Activated CD8-positive, alpha-beta memory T cell treated with anti-CD3 and anti-CD28 coated beads, Interleukin-2, amount 10 ng/mL, durations not matched to agents 7 days and 5 days (primary cell): ENCODE measurements at regions of chr16 and their contacts with region 1.

Region 1: DNA sequence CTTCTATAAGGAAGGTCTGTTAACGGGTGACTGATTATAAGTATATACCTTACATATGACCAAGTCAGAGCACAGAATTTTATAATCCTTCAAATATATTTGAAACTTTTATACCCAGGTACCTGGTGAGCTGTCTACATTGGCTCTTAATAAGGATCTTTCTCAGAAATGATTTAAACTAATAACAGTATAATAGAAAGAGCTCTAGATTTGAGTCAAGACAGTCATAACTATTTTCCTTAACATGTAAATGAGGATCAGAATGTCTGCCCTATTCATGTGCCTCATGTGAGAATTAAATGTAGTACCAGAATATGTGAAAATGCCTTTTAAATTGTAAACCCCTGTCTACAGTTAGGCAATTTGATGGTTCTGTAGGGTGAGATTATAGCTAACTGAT is 14.5 kb downstream of the CBFB start:
- DNase-seq: no peak
- ATAC-seq: no peak
- H3K4me3 Mint-ChIP-seq: no peak overlapping the region
- H3K27ac Mint-ChIP-seq: no peak overlapping the region
- H3K4me1 Mint-ChIP-seq: peaks cover 38% of the 10 kb centered on the region
- H3K27me3 Mint-ChIP-seq: no peaks in the 10 kb centered on the region

Region 2: DNA sequence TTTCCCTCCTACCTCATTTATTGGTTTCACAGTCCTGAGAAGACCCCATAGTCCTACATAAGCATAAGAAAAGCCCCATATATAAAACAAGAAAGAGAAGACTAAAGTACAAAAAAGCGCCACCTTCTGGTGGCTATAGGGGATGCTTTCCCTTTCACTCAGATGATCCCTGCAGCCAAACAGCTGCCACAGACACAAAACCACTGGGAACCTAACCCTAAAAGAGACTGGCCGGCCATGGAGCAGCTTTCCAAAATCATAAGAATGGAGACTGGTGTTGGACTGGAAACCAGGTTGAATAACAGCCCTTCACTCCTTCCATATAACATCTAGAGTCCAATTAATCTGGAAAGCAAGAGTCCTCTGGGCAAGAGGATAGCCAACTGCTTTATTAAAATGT is 303.4 kb before region 1 on chr16:
- CTCF ChIA-PET with region 1: no interaction called
- DNase-seq: peak; percentile 57
- ATAC-seq: peak; percentile 57
- H3K4me3 Mint-ChIP-seq: no peak overlapping the region
- H3K27ac Mint-ChIP-seq: no peak overlapping the region
- H3K4me1 Mint-ChIP-seq: peaks cover 27% of the 10 kb centered on the region
- H3K27me3 Mint-ChIP-seq: no peaks in the 10 kb centered on the region

Region 3: DNA sequence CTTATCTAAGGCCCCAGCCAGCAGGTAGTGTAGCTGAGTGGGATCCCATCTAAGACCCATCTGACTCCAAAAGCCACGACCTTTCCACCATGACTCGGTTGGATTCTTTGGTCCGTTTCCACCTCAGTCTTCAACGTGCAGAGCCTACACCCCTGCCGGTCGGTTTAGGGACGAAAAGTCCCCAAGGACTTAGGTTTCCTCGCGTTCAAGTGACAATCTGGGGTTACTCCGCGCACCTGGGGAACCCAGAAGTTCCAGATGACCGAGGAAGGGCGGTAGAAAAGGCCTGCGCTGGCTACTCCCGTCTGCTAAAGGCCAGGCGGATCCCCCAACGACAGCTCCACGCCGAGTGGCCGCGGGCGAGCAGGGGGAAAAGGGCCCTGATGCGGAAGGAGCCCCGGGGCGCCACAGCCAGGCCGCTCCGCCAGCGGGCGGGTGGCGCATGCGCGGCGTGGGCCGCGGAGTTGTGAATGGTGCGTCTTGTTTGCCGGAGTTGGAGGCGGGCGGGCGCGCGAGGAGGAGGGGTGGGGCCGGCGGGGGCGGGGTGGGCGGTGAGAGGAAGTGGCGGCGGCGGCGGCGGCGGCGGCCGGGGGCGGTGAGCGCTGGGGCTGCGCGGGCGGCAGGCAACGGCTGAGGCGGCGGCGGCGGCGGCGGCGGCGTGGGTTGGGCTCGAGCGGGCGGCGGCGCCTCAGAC is 14.7 kb before region 1 on chr16 and contains the start of gene CBFB:
- CTCF ChIA-PET with region 1: interaction called, 12 read pairs
- DNase-seq: peak; percentile 95
- ATAC-seq: peak; percentile 94
- H3K4me3 Mint-ChIP-seq: peak within 1 kb of the TSS; percentile 92
- H3K27ac Mint-ChIP-seq: peak within 1 kb of the TSS; percentile 94
- H3K4me1 Mint-ChIP-seq: peaks cover 48% of the 10 kb centered on the region
- H3K27me3 Mint-ChIP-seq: no peaks in the 10 kb centered on the region
- total RNA-seq, gene CBFB: 180 to 196 TPM

Region 4: GRCh38 chr16:67068212-67068753 is 24.9 kb after region 1 on chr16:
- CTCF ChIA-PET with region 1: no interaction called
- DNase-seq: no peak
- ATAC-seq: no peak
- H3K4me3 Mint-ChIP-seq: no peak overlapping the region
- H3K27ac Mint-ChIP-seq: no peak overlapping the region
- H3K4me1 Mint-ChIP-seq: peaks cover 4% of the 10 kb centered on the region
- H3K27me3 Mint-ChIP-seq: no peaks in the 10 kb centered on the region

Region 5: GRCh38 chr16:67091906-67092566 is 48.6 kb after region 1 on chr16:
- CTCF ChIA-PET with region 1: no interaction called
- DNase-seq: no peak
- ATAC-seq: no peak
- H3K4me3 Mint-ChIP-seq: no peak overlapping the region
- H3K27ac Mint-ChIP-seq: peak overlapping the region; percentile 21
- H3K4me1 Mint-ChIP-seq: peaks cover 2% of the 10 kb centered on the region
- H3K27me3 Mint-ChIP-seq: no peaks in the 10 kb centered on the region

Region 6: DNA sequence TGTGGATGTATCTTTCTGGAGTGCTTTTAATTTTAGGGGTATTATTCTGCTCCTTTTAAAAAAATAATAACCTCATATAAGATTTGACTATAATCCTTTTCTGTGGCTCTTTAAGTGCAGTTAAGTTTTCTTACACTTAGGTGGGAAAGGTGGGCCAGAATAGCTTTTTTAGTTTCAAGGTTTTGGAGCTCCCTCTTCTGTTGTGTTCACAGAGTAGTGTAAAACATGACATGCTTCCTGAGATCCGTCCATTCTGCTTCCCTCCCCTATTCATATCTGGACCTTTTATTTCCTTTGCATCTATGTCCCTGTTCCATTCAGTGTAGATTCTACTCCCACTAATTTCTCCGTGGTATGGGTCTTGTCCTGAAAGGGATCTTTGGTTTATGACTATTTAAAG is 296.0 kb after region 1 on chr16:
- CTCF ChIA-PET with region 1: no interaction called
- DNase-seq: no peak
- ATAC-seq: peak; percentile 16
- H3K4me3 Mint-ChIP-seq: no peak overlapping the region
- H3K27ac Mint-ChIP-seq: no peak overlapping the region
- H3K4me1 Mint-ChIP-seq: no peaks in the 10 kb centered on the region
- H3K27me3 Mint-ChIP-seq: peaks cover 17% of the 10 kb centered on the region